ENCODE measurements at regions of chr20 and their contacts with region 1.

Region 1: DNA sequence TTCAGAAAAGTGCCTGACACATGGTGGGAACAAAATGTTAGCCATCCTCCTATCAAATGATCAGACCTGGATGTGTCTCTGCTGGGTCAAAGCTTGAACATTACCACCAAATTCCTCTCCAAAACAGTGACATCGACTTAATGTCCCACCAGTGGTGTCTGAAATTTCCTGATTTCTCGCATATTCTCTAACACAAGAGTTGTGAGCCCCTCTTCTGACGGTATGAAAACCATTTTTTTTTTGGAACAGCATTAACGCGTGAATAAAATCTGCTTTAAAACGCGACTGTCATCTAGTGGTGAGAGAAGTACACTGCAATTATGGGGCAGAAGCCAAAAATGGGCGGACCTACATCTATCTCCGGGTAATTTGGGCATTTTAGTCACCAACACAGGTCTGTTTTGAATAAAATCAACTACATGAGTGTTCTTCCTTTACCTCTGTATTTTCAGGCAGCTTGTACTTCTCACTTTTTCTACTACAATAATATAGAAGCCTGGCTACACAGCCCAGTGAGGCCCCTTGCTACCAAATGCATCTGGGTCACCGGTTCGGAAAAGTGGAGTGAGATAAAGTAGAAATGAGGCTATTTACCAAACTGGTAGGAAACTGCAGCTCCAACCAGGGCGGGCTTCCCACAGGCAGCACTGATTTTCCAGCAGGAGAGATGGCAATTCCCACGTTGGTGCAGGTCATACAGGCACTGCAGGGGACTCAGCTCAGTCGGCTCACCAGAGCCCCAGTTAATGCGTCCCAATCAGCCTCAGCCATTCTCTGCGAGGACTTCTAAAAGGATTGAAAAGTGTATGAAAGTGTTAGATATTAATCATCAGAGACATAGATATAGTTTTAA is 27.4 kb downstream of the MGME1 start:
- DNase-seq: peak; percentile 62
- H3K4me3 ChIP-seq: no peak overlapping the region
- H3K27ac ChIP-seq: no peak overlapping the region
- H3K4me1 ChIP-seq: peaks cover 0 to 28% (median 11%) of the 10 kb centered on the region in 6 donors
- H3K27me3 ChIP-seq: no peaks in the 10 kb centered on the region
- CTCF ChIP-seq: peak; percentile 77 to 95 (median 92)
- POLR2A ChIP-seq: no peak

Region 2: DNA sequence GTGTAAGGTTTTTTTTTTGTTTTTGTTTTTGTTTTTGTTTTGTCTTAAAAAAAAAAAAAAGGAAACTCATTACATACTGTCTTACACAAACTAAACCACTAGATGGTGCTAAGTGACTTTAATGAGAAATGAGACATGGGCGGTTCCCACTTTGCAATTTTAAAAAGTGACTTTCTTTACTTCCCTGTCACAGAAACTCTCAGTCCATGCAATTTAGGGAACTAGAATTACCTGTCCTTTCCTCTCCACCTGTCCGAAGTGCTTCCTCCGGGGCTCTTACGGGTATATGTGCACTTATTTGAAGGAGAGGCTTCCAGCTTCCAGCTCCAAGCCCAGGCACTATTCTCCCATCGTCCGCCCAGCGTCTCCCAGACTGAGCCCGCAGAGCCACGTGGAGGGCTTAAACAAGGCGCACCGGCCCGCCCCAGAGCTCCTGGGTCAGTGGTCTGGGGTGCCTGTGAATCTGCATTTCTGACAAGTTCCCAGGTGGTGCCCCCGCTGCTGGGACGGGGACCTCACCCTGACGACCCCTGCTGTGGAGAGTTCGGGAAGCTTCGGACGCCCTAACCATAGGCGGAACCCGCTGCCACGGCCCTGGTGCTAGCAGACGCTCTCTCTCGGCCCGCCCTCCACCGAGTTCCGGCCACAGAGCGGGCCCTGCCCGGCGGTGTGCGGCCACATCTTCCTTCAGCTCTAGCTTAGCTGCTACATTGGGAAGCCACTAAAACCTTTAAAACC is 491.1 kb before region 1 on chr20:
- intact Hi-C with region 1: loop called (anchors 10 kb)
- DNase-seq: peak; percentile 93
- H3K4me3 ChIP-seq: peak overlapping the region; percentile 50 to 75 (median 54)
- H3K27ac ChIP-seq: peak overlapping the region in 7 of 8 donors; percentile 40 to 72 (median 55)
- H3K4me1 ChIP-seq: peaks cover 0 to 35% (median 16%) of the 10 kb centered on the region in 6 donors
- H3K27me3 ChIP-seq: no peaks in the 10 kb centered on the region
- CTCF ChIP-seq: peak; percentile 37 to 85 (median 71)
- POLR2A ChIP-seq: no peak

Region 3: GRCh38 chr20:17536944-17537444 is 459.2 kb before region 1 on chr20:
- intact Hi-C with region 1: loop called (anchors 10 kb)
- DNase-seq: no peak
- H3K4me3 ChIP-seq: no peak overlapping the region
- H3K27ac ChIP-seq: no peak overlapping the region
- H3K4me1 ChIP-seq: peaks cover 0 to 6% (median under 1%) of the 10 kb centered on the region in 6 donors
- H3K27me3 ChIP-seq: peaks cover 0 to 25% (median 0%) of the 10 kb centered on the region in 7 donors
- CTCF ChIP-seq: peak; percentile 75 to 97 (median 87)
- POLR2A ChIP-seq: no peak

Region 4: GRCh38 chr20:17680836-17681725 is 315.1 kb before region 1 on chr20:
- intact Hi-C with region 1: loop called (anchors 10 kb)
- DNase-seq: peak; percentile 98
- H3K4me3 ChIP-seq: peak overlapping the region; percentile 60 to 97 (median 90)
- H3K27ac ChIP-seq: peak overlapping the region; percentile 83 to 97 (median 92)
- H3K4me1 ChIP-seq: peaks cover 14 to 47% (median 35%) of the 10 kb centered on the region in 6 donors
- H3K27me3 ChIP-seq: peaks cover 0 to 4% (median 0%) of the 10 kb centered on the region in 7 donors
- CTCF ChIP-seq: peak in 9 of 11 experiments; percentile 2 to 89 (median 75)
- POLR2A ChIP-seq: no peak

Region 5: GRCh38 chr20:17943343-17943742 is 52.9 kb before region 1 on chr20:
- intact Hi-C with region 1: loop called (anchors 10 kb)
- DNase-seq: no peak
- H3K4me3 ChIP-seq: no peak overlapping the region
- H3K27ac ChIP-seq: peak overlapping the region in 1 of 8 donors; percentile 21
- H3K4me1 ChIP-seq: peaks cover 7 to 49% (median 19%) of the 10 kb centered on the region in 6 donors
- H3K27me3 ChIP-seq: no peaks in the 10 kb centered on the region
- CTCF ChIP-seq: no peak
- POLR2A ChIP-seq: no peak

Measured in spleen (tissue), 13 donors.